ENCODE measurements at regions of chr5 and their contacts with region 1.

Region 1: GRCh38 chr5:17216176-17216973 is 1.1 kb upstream of the BASP1 start:
- DNase-seq: peak; percentile 87
- H3K4me3 ChIP-seq: peak overlapping the region; percentile 45 to 87 (median 63)
- H3K27ac ChIP-seq: no peak overlapping the region
- H3K4me1 ChIP-seq: peaks cover 24% of the 10 kb centered on the region
- H3K27me3 ChIP-seq: peaks cover 5 to 10% of the 10 kb centered on the region in 2 experiments
- CTCF ChIP-seq: peak; percentile 74 to 87
- POLR2A ChIP-seq: no peak

Region 2: GRCh38 chr5:17069995-17070511 is 146.3 kb before region 1 on chr5:
- CTCF ChIA-PET with region 1: no interaction called
- POLR2A ChIA-PET with region 1: no interaction called
- dilution Hi-C with region 1: no loop called
- intact Hi-C with region 1: no loop called
- DNase-seq: peak; percentile 74
- H3K4me3 ChIP-seq: no peak overlapping the region
- H3K27ac ChIP-seq: no peak overlapping the region
- H3K4me1 ChIP-seq: peaks cover 14% of the 10 kb centered on the region
- H3K27me3 ChIP-seq: no peaks in the 10 kb centered on the region
- CTCF ChIP-seq: no peak
- POLR2A ChIP-seq: no peak

Region 3: GRCh38 chr5:17233488-17233887 is 17.1 kb after region 1 on chr5:
- CTCF ChIA-PET with region 1: interaction called, 16 read pairs
- POLR2A ChIA-PET with region 1: interaction called, 8 read pairs
- dilution Hi-C with region 1: no loop called
- intact Hi-C with region 1: loop called (anchors 1 kb)
- DNase-seq: no peak
- H3K4me3 ChIP-seq: no peak overlapping the region
- H3K27ac ChIP-seq: no peak overlapping the region
- H3K4me1 ChIP-seq: peaks cover 31% of the 10 kb centered on the region
- H3K27me3 ChIP-seq: no peaks in the 10 kb centered on the region
- CTCF ChIP-seq: no peak
- POLR2A ChIP-seq: no peak

Region 4: GRCh38 chr5:17248999-17249634 is 32.7 kb after region 1 on chr5:
- CTCF ChIA-PET with region 1: interaction called, 14 read pairs
- POLR2A ChIA-PET with region 1: interaction called, 7 read pairs
- dilution Hi-C with region 1: no loop called
- intact Hi-C with region 1: loop called (anchors 1 kb)
- DNase-seq: peak; percentile 65
- H3K4me3 ChIP-seq: no peak overlapping the region
- H3K27ac ChIP-seq: peak overlapping the region; percentile 68
- H3K4me1 ChIP-seq: peaks cover 42% of the 10 kb centered on the region
- H3K27me3 ChIP-seq: no peaks in the 10 kb centered on the region
- CTCF ChIP-seq: no peak
- POLR2A ChIP-seq: no peak

Region 5: DNA sequence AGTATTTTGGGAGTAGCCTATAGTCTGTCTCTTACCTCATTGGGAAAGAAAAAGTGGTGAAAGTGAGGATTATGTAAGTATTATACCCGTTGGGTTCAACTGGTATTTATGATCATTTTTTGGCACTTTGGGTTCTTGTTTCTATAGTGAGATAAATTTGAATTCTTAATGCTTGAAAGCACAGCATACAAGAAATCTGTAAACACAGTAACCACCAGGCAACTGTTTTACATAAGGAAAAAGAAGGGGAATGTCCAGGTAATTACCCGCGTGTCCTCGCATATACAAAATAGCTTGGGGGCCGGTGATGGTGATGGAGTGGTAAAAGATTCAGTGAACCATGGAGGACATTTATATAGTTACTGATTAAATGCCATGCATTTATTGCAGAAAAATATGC is 61.5 kb after region 1 on chr5:
- CTCF ChIA-PET with region 1: interaction called, 12 read pairs
- POLR2A ChIA-PET with region 1: no interaction called
- dilution Hi-C with region 1: no loop called
- intact Hi-C with region 1: loop called (anchors 2 kb)
- DNase-seq: no peak
- H3K4me3 ChIP-seq: no peak overlapping the region
- H3K27ac ChIP-seq: no peak overlapping the region
- H3K4me1 ChIP-seq: no peaks in the 10 kb centered on the region
- H3K27me3 ChIP-seq: no peaks in the 10 kb centered on the region
- CTCF ChIP-seq: no peak
- POLR2A ChIP-seq: no peak

Region 6: GRCh38 chr5:17343675-17344074 is 127.3 kb after region 1 on chr5:
- CTCF ChIA-PET with region 1: interaction called, 10 read pairs
- POLR2A ChIA-PET with region 1: no interaction called
- dilution Hi-C with region 1: no loop called
- intact Hi-C with region 1: no loop called
- DNase-seq: peak; percentile 91
- H3K4me3 ChIP-seq: no peak overlapping the region
- H3K27ac ChIP-seq: no peak overlapping the region
- H3K4me1 ChIP-seq: peaks cover 9% of the 10 kb centered on the region
- H3K27me3 ChIP-seq: peaks cover 0 to 2% of the 10 kb centered on the region in 2 experiments
- CTCF ChIP-seq: no peak
- POLR2A ChIP-seq: no peak

Region 7: GRCh38 chr5:18281682-18282557 is 1065.5 kb after region 1 on chr5:
- CTCF ChIA-PET with region 1: interaction called, 227 read pairs
- POLR2A ChIA-PET with region 1: interaction called, 4 read pairs
- dilution Hi-C with region 1: no loop called
- intact Hi-C with region 1: no loop called
- DNase-seq: peak; percentile 52
- H3K4me3 ChIP-seq: no peak overlapping the region
- H3K27ac ChIP-seq: no peak overlapping the region
- H3K4me1 ChIP-seq: no peaks in the 10 kb centered on the region
- H3K27me3 ChIP-seq: no peaks in the 10 kb centered on the region
- CTCF ChIP-seq: peak; percentile 21 to 24
- POLR2A ChIP-seq: no peak

Region 8: GRCh38 chr5:18314192-18314778 is 1097.9 kb after region 1 on chr5:
- CTCF ChIA-PET with region 1: interaction called, 65 read pairs
- POLR2A ChIA-PET with region 1: no interaction called
- dilution Hi-C with region 1: no loop called
- intact Hi-C with region 1: loop called (anchors 1 kb)
- DNase-seq: peak; percentile 32
- H3K4me3 ChIP-seq: no peak overlapping the region
- H3K27ac ChIP-seq: no peak overlapping the region
- H3K4me1 ChIP-seq: no peaks in the 10 kb centered on the region
- H3K27me3 ChIP-seq: no peaks in the 10 kb centered on the region
- CTCF ChIP-seq: peak in 1 of 2 donors; percentile 19
- POLR2A ChIP-seq: no peak

Measured in endothelial cell of umbilical vein (primary cell).